Caco-2 (cell line): ENCODE measurements at regions of chr12 and their contacts with region 1.

Region 1: GRCh38 chr12:93784339-93785086 is 107.3 kb downstream of the CRADD start:
- DNase-seq: peak; percentile 23 to 59
- H3K4me3 ChIP-seq: no peak overlapping the region
- H3K4me3 Mint-ChIP-seq: peak overlapping the region; percentile 49
- H3K27ac Mint-ChIP-seq: peak overlapping the region; percentile 48
- H3K4me1 ChIP-seq: peaks cover 34% of the 10 kb centered on the region
- H3K4me1 Mint-ChIP-seq: peaks cover 29% of the 10 kb centered on the region
- H3K27me3 ChIP-seq: no peaks in the 10 kb centered on the region
- H3K27me3 Mint-ChIP-seq: no peaks in the 10 kb centered on the region
- CTCF ChIP-seq: no peak

Region 2: GRCh38 chr12:93759512-93760081 is 24.9 kb before region 1 on chr12:
- CTCF ChIA-PET with region 1: no interaction called
- POLR2A ChIA-PET with region 1: no interaction called
- intact Hi-C with region 1: loop called (anchors 1 kb)
- DNase-seq: no peak
- H3K4me3 ChIP-seq: no peak overlapping the region
- H3K4me3 Mint-ChIP-seq: peak overlapping the region; percentile 32
- H3K27ac Mint-ChIP-seq: peak overlapping the region; percentile 25
- H3K4me1 ChIP-seq: peaks cover 41% of the 10 kb centered on the region
- H3K4me1 Mint-ChIP-seq: peaks cover 19% of the 10 kb centered on the region
- H3K27me3 ChIP-seq: no peaks in the 10 kb centered on the region
- H3K27me3 Mint-ChIP-seq: no peaks in the 10 kb centered on the region
- CTCF ChIP-seq: no peak